T-cell (primary cell): ENCODE measurements at regions of chr4 and their contacts with region 1.

Region 1: GRCh38 chr4:121199742-121200561 is 35.8 kb upstream of the TNIP3 start:
- DNase-seq: peak in 29 of 35 experiments; percentile 6 to 67 (median 30)
- ATAC-seq: peak; percentile 54 to 95 (median 86)
- H3K4me3 ChIP-seq: no peak overlapping the region
- H3K4me3 Mint-ChIP-seq: peak overlapping the region in 2 of 3 donors; percentile 39 to 42
- H3K27ac ChIP-seq: peak overlapping the region; percentile 53
- H3K27ac Mint-ChIP-seq: peak overlapping the region; percentile 44 to 50
- H3K4me1 ChIP-seq: peaks cover 7 to 17% of the 10 kb centered on the region in 2 experiments
- H3K4me1 Mint-ChIP-seq: peaks cover 26 to 29% (median 28%) of the 10 kb centered on the region in 3 donors
- H3K27me3 ChIP-seq: no peaks in the 10 kb centered on the region
- H3K27me3 Mint-ChIP-seq: no peaks in the 10 kb centered on the region

Region 2: GRCh38 chr4:121219227-121219626 is 19.3 kb after region 1 on chr4:
- CTCF ChIA-PET with region 1: interaction called, 3 to 18 read pairs
- POLR2A ChIA-PET with region 1: interaction called in 1 of 2 experiments, 5 read pairs
- DNase-seq: no peak
- ATAC-seq: no peak
- H3K4me3 ChIP-seq: no peak overlapping the region
- H3K4me3 Mint-ChIP-seq: peak overlapping the region; percentile 13 to 47 (median 17)
- H3K27ac ChIP-seq: peak overlapping the region; percentile 39
- H3K27ac Mint-ChIP-seq: peak overlapping the region; percentile 81 to 88
- H3K4me1 ChIP-seq: peaks cover 10 to 15% of the 10 kb centered on the region in 2 experiments
- H3K4me1 Mint-ChIP-seq: peaks cover 32 to 42% (median 32%) of the 10 kb centered on the region in 3 donors
- H3K27me3 ChIP-seq: no peaks in the 10 kb centered on the region
- H3K27me3 Mint-ChIP-seq: no peaks in the 10 kb centered on the region